Posterior vena cava (tissue), 2 donors: ENCODE measurements at regions of chr2 and their contacts with region 1.

Region 1: GRCh38 chr2:69816923-69817542 is 12.4 kb upstream of the GMCL1 start:
- DNase-seq: no peak

Region 2: DNA sequence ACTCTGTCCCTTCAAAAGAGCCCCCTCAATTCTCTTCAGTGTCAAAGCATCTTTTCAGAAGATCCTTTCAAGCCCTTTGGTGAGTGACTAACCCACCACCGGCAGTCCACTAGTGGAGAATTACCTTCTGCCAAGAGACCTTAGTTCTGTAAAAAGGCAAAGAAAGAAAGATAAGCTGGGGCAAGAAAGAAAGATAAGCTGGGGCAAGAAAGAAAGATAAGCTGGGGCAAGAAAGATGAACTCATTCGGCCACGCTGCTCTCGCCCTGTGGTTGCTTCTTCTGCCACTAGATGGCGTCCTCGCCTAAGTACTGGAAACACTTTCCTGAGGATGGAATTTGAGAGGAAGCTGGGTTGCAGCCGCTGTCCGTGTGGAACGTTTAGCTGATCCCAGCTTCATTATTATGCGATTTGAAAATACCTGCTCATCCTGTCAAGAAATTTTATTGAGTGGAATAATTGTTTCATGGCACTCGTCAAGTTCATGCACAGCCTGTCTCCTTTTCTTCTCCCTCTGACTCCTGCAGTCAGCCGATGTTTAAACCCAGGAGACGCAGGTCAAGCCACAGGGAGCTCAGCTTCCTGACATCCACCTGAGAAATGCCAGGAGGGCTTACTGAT is 92.4 kb before region 1 on chr2:
- intact Hi-C with region 1: loop called (anchors 2 kb)
- DNase-seq: peak; percentile 93